ENCODE measurements at regions of chr12 and their contacts with region 1.

Region 1: GRCh38 chr12:54359033-54359761 is 5.1 kb downstream of the GPR84 start:
- DNase-seq: peak; percentile 68 to 98 (median 94)
- ATAC-seq: peak; percentile 95
- H3K4me3 ChIP-seq: peak overlapping the region; percentile 88
- H3K4me3 Mint-ChIP-seq: no peak overlapping the region
- H3K27ac ChIP-seq: peak overlapping the region; percentile 85
- H3K27ac Mint-ChIP-seq: no peak overlapping the region
- H3K4me1 ChIP-seq: peaks cover 5 to 18% of the 10 kb centered on the region in 2 donors
- H3K4me1 Mint-ChIP-seq: peaks cover 11 to 29% (median 19%) of the 10 kb centered on the region in 7 donors
- H3K27me3 ChIP-seq: no peaks in the 10 kb centered on the region
- H3K27me3 Mint-ChIP-seq: no peaks in the 10 kb centered on the region

Region 2: GRCh38 chr12:54191550-54192022 is 167.6 kb before region 1 on chr12:
- CTCF ChIA-PET with region 1: no interaction called
- POLR2A ChIA-PET with region 1: no interaction called
- intact Hi-C with region 1: loop called in 1 of 2 experiments (anchors 1 kb)
- DNase-seq: peak; percentile 58 to 85 (median 76)
- ATAC-seq: peak; percentile 82
- H3K4me3 ChIP-seq: no peak overlapping the region
- H3K4me3 Mint-ChIP-seq: peak overlapping the region in 3 of 10 donors; percentile 10 to 44 (median 32)
- H3K27ac ChIP-seq: no peak overlapping the region
- H3K27ac Mint-ChIP-seq: peak overlapping the region in 3 of 9 donors; percentile 3 to 48 (median 17)
- H3K4me1 ChIP-seq: peaks cover 8 to 9% of the 10 kb centered on the region in 2 donors
- H3K4me1 Mint-ChIP-seq: peaks cover 17 to 31% (median 27%) of the 10 kb centered on the region in 7 donors
- H3K27me3 ChIP-seq: peaks cover 0 to 6% of the 10 kb centered on the region in 2 donors
- H3K27me3 Mint-ChIP-seq: peaks cover 39 to 61% (median 46%) of the 10 kb centered on the region in 5 donors

Region 3: GRCh38 chr12:54220092-54220557 is 139.1 kb before region 1 on chr12:
- CTCF ChIA-PET with region 1: interaction called, 8 read pairs
- POLR2A ChIA-PET with region 1: interaction called, 3 read pairs
- intact Hi-C with region 1: loop called in 1 of 2 experiments (anchors 1 kb)
- DNase-seq: peak; percentile 37 to 65 (median 58)
- ATAC-seq: peak; percentile 74
- H3K4me3 ChIP-seq: no peak overlapping the region
- H3K4me3 Mint-ChIP-seq: peak overlapping the region in 2 of 10 donors; percentile 12 to 31
- H3K27ac ChIP-seq: no peak overlapping the region
- H3K27ac Mint-ChIP-seq: no peak overlapping the region
- H3K4me1 ChIP-seq: peaks cover 23 to 25% of the 10 kb centered on the region in 2 donors
- H3K4me1 Mint-ChIP-seq: peaks cover 18 to 42% (median 28%) of the 10 kb centered on the region in 7 donors
- H3K27me3 ChIP-seq: no peaks in the 10 kb centered on the region
- H3K27me3 Mint-ChIP-seq: peaks cover 0 to 19% (median 4%) of the 10 kb centered on the region in 5 donors

Region 4: DNA sequence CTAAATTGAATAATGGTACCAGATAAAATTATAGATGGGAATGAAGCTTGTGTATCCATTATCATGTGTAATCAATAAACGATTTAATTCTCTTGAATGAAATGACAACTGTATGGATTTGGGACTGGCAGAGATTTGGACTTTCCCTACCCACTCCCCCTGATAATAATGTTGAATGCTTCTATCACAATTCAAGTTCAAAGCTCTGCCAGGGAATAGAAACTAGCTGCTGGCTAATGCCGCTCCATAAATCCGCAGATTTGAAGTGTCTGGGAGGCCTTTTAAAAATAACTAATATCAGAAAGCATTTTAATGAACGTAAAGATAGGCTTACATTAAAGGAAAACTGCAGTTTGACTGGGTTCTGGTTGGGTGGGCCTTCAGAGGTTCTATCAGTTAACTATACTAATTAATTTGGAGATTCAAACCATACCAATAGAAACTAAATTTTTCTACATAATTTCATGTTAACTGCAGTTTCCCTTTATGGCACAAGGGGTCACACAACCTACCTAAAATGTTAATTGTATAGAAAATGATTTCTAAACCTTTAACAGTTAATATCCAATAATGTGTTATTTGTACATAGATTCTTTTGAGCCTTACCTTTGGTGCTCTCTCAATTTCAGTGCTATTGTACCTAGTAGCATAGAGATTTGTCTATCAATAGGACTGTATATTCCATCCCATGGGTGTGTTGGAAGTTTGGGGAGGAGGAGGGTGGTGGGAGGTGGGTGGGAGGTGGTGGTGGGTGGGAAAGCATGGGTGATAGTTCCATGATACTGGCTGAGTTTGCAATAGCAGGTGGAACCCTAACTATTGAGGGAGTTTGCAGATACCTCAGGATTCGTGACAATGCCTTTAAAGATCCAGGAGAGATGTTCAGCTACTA is 73.8 kb before region 1 on chr12:
- CTCF ChIA-PET with region 1: interaction called, 4 read pairs
- POLR2A ChIA-PET with region 1: interaction called, 68 read pairs
- intact Hi-C with region 1: loop called (anchors 1 kb)
- DNase-seq: peak in 1 of 9 donors; percentile 10
- ATAC-seq: no peak
- H3K4me3 ChIP-seq: no peak overlapping the region
- H3K4me3 Mint-ChIP-seq: peak overlapping the region in 6 of 10 donors; percentile 47 to 72 (median 54)
- H3K27ac ChIP-seq: peak overlapping the region; percentile 28
- H3K27ac Mint-ChIP-seq: peak overlapping the region in 8 of 9 donors; percentile 25 to 84 (median 55)
- H3K4me1 ChIP-seq: peaks cover 44% of the 10 kb centered on the region in 2 donors
- H3K4me1 Mint-ChIP-seq: peaks cover 0 to 61% (median 43%) of the 10 kb centered on the region in 7 donors
- H3K27me3 ChIP-seq: no peaks in the 10 kb centered on the region
- H3K27me3 Mint-ChIP-seq: no peaks in the 10 kb centered on the region

Region 5: GRCh38 chr12:54324617-54325441 is 34.4 kb before region 1 on chr12 and contains the start of gene COPZ1:
- CTCF ChIA-PET with region 1: interaction called, 5 read pairs
- POLR2A ChIA-PET with region 1: interaction called, 25 read pairs
- intact Hi-C with region 1: loop called (anchors 1 kb)
- DNase-seq: peak; percentile 69 to 98 (median 94)
- ATAC-seq: peak; percentile 97
- H3K4me3 ChIP-seq: peak within 1 kb of the TSS; percentile 95
- H3K4me3 Mint-ChIP-seq: peak within 1 kb of the TSS; percentile 87 to 100 (median 95)
- H3K27ac ChIP-seq: peak within 1 kb of the TSS; percentile 80
- H3K27ac Mint-ChIP-seq: peak within 1 kb of the TSS; percentile 91 to 99 (median 95)
- H3K4me1 ChIP-seq: peaks cover 4 to 22% of the 10 kb centered on the region in 2 donors
- H3K4me1 Mint-ChIP-seq: peaks cover 8 to 46% (median 42%) of the 10 kb centered on the region in 7 donors
- H3K27me3 ChIP-seq: no peaks in the 10 kb centered on the region
- H3K27me3 Mint-ChIP-seq: no peaks in the 10 kb centered on the region
- total RNA-seq, gene COPZ1: 47.5 to 141 (median 80.0) TPM

Region 6: GRCh38 chr12:54411391-54412241 is 52.4 kb after region 1 on chr12:
- CTCF ChIA-PET with region 1: no interaction called
- POLR2A ChIA-PET with region 1: interaction called, 4 read pairs
- intact Hi-C with region 1: loop called (anchors 1 to 2 kb)
- DNase-seq: peak; percentile 44 to 66 (median 58)
- ATAC-seq: peak; percentile 72
- H3K4me3 ChIP-seq: peak overlapping the region; percentile 84
- H3K4me3 Mint-ChIP-seq: peak overlapping the region; percentile 80 to 92 (median 87)
- H3K27ac ChIP-seq: peak overlapping the region; percentile 96
- H3K27ac Mint-ChIP-seq: peak overlapping the region; percentile 89 to 100 (median 98)
- H3K4me1 ChIP-seq: peaks cover 58 to 66% of the 10 kb centered on the region in 2 donors
- H3K4me1 Mint-ChIP-seq: peaks cover 46 to 97% (median 72%) of the 10 kb centered on the region in 7 donors
- H3K27me3 ChIP-seq: no peaks in the 10 kb centered on the region
- H3K27me3 Mint-ChIP-seq: no peaks in the 10 kb centered on the region

Measured in naive thymus-derived CD4-positive, alpha-beta T cell (primary cell).